Pancreas (tissue), 10 donors: ENCODE measurements at regions of chr14 and their contacts with region 1.

Region 1: DNA sequence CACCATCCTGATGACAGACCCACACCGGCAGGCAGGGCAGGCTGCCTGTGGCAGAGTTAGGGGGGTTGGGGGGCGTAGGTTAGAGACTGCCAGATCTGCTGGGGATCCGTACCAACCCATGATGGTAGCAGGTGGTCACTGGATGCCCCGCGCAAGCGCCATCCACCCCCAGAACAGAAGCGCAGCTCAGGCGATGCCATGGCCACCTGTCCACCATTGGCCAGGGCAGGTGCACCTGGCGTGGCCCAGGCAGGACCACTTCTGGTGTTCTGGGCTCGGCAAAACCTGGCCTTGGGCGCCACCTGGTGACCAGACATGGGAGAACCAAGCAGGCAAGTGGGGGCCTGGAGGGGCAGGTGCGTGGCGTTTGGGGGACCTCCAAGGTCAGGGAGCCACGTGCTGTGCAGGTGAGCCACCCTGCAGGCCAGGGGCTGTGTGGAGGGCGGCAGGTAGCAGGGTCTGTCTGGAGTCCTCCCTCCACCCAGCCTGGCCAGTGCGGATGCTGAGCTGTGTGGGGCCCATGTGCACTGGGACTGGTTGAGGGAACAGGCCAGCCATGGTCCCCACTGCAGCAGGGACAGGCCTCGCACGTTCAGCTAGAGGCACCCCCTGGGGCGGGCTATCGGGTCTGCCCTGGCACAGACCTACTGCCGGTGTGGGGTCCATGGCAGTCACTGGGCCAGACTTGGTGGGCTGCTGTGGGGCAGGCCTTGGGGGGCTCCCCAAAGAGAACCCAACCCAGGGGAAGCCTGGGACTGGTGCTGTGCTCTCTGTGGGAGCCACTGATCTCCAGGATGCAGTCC is 15.6 kb downstream of the BAG5 start:
- DNase-seq: peak; percentile 59 to 92 (median 80)
- ATAC-seq: peak; percentile 53 to 79 (median 75)
- H3K4me3 ChIP-seq: no peak overlapping the region
- H3K27ac ChIP-seq: no peak overlapping the region
- H3K4me1 ChIP-seq: peaks cover 0 to 11% (median 3%) of the 10 kb centered on the region in 3 donors
- H3K27me3 ChIP-seq: no peaks in the 10 kb centered on the region
- CTCF ChIP-seq: peak; percentile 78 to 91 (median 87)

Region 2: DNA sequence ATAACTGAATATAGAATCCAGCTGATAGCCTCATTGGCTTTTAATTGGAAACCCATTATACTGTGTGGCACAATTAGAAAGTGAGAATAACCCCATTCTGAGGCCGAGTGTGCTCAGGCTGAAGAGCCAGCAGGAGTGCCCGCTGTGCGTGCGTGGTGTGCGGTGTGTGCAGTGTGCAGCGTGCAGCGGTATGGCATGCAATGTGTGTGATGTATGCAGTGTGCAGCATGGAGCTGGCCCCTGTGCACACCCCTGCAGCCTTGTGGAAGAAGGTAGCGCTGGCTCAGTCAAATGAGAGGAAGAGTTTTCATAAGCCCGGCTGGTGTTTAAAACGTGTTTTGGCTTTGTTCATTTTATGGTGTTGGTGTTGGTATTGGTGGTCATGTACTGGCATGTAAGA is 47.1 kb before region 1 on chr14:
- intact Hi-C with region 1: loop called in 1 of 3 experiments (anchors 10 kb)
- DNase-seq: peak in 1 of 6 donors; percentile 44
- ATAC-seq: peak; percentile 17 to 32 (median 30)
- H3K4me3 ChIP-seq: no peak overlapping the region
- H3K27ac ChIP-seq: no peak overlapping the region
- H3K4me1 ChIP-seq: no peaks in the 10 kb centered on the region
- H3K27me3 ChIP-seq: no peaks in the 10 kb centered on the region
- CTCF ChIP-seq: no peak

Region 3: GRCh38 chr14:103518422-103519042 is 28.3 kb before region 1 on chr14:
- intact Hi-C with region 1: loop called in 2 of 3 experiments (anchors 2 to 5 kb)
- DNase-seq: peak in 5 of 6 donors; percentile 52 to 91 (median 81)
- ATAC-seq: peak; percentile 25 to 61 (median 42)
- H3K4me3 ChIP-seq: no peak overlapping the region
- H3K27ac ChIP-seq: no peak overlapping the region
- H3K4me1 ChIP-seq: peaks cover 0 to 10% (median 4%) of the 10 kb centered on the region in 3 donors
- H3K27me3 ChIP-seq: no peaks in the 10 kb centered on the region
- CTCF ChIP-seq: peak; percentile 76 to 88 (median 86)

Region 4: GRCh38 chr14:103679351-103679750 is 132.5 kb after region 1 on chr14:
- intact Hi-C with region 1: no loop called
- DNase-seq: no peak
- ATAC-seq: peak in 3 of 4 donors; percentile 67 to 84 (median 81)
- H3K4me3 ChIP-seq: no peak overlapping the region
- H3K27ac ChIP-seq: no peak overlapping the region
- H3K4me1 ChIP-seq: no peaks in the 10 kb centered on the region
- H3K27me3 ChIP-seq: no peaks in the 10 kb centered on the region
- CTCF ChIP-seq: no peak